Activated T-helper 1 cell treated with anti-CD3 and anti-CD28 coated beads, Interleukin-12 subunit alpha, Interleukin-12 subunit beta, Interleukin-2, Interleukin-4 antibody, amounts not matched to agents 30 ng/mL and 10 ng/mL and 1 ng/mL, durations not matched to agents 14 hours and 24 hours and 36 hours (primary cell): ENCODE measurements at regions of chr1 and their contacts with region 1.

Region 1: DNA sequence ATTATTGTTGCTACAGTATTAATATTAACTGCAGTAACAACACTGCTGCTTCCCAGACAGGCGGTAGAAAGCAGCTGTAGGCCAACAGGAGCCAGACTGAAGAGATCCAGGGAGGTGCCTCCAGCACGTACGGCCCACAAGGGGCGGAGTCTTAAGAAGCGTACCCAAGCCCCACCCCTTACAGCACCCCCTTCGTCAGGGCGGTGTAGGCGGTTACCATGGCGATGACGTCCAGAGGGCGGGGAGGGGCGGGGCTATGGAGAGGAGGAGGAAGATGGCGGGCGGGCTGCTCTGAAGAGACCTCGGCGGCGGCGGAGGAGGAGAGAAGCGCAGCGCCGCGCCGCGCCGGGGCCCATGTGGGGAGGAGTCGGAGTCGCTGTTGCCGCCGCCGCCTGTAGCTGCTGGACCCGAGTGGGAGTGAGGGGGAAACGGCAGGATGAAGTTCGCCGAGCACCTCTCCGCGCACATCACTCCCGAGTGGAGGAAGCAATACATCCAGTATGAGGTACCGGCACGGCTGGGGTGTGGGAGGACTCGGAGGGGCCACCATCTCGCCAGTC is at the start of gene XPR1:
- DNase-seq: peak; percentile 91
- H3K4me3 Mint-ChIP-seq: peak within 1 kb of the TSS; percentile 87
- H3K27ac Mint-ChIP-seq: peak within 1 kb of the TSS; percentile 87
- H3K4me1 Mint-ChIP-seq: peaks cover 8% of the 10 kb centered on the region
- H3K27me3 Mint-ChIP-seq: peaks cover 5% of the 10 kb centered on the region
- total RNA-seq, gene XPR1: 21.1 and 21.2 TPM in 2 replicates

Region 2: GRCh38 chr1:179129702-179130473 is 1502.0 kb before region 1 on chr1:
- intact Hi-C with region 1: loop called (anchors 5 kb)
- DNase-seq: no peak
- H3K4me3 Mint-ChIP-seq: peak overlapping the region; percentile 64
- H3K27ac Mint-ChIP-seq: peak overlapping the region; percentile 88
- H3K4me1 Mint-ChIP-seq: peaks cover 18% of the 10 kb centered on the region
- H3K27me3 Mint-ChIP-seq: no peaks in the 10 kb centered on the region

Region 3: DNA sequence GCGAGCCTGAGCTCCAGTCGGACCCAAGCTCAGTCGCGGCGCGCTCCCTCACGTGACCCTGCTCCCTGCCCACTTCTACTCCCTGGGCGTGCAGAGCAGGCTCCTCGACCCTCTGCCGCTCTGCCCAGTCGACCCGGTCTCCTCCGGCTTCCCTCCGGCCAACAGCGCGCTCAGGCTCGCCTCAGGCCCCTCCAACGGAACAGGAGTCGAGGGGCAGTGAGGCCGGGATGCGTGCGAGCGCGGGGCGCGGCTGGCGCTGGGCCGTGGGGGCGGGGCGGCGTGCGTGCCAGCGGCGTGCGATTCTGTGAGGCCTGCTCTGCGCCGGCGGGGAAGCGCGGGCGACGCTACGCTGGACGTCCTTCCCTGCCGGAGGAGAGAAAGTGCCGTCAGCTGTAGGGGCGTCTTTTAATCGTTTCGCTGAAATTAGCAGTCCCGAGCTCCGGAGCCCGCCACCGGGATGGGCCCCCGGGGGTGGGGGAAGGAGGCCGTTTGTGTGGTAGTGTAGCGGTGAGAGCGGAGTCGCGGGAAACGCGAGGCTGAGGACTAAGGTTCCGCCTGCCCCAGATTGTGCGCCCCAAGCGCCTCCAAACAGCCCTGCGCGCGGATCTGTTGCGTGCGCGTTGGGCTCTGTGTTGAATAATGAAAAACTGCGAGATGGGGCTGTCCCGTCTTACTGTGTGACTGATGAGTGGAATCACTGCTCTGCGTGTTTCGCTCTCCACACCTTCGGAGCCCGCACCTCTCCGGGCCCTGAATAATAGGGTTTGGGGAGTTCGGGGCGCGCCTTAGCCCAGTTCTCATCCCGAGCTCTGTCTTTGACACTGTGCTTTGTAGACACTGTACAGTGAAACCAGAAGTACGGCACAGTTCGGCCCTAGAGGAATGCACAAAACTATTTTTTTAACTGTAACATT is 129.2 kb before region 1 on chr1 and contains the start of gene ACBD6:
- intact Hi-C with region 1: loop called (anchors 1 kb)
- DNase-seq: peak; percentile 81
- H3K4me3 Mint-ChIP-seq: peak within 1 kb of the TSS; percentile 97
- H3K27ac Mint-ChIP-seq: peak within 1 kb of the TSS; percentile 97
- H3K4me1 Mint-ChIP-seq: peaks cover 25% of the 10 kb centered on the region
- H3K27me3 Mint-ChIP-seq: peaks cover 3% of the 10 kb centered on the region
- total RNA-seq, gene ACBD6: 49.4 and 50.9 TPM in 2 replicates

Region 4: DNA sequence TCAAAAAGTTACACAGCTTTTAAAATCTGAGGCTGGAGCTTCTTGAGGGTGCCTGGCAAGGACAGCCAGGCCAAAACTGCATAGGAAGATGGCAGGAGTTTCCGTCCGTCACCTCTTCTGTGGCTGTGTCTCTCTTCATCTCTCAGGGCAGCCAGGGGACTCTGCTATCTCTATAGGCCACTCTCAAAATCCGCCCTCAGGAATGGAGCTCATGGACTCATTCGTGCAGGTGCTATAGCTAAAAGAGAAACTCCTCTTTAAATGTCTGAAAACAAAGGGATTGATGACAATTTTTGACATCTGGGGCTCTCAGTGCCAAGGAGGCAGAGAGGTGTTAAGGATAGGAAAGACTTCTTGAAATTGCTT is 45.9 kb before region 1 on chr1:
- intact Hi-C with region 1: loop called (anchors 1 kb)
- DNase-seq: no peak
- H3K4me3 Mint-ChIP-seq: peak overlapping the region; percentile 70
- H3K27ac Mint-ChIP-seq: peak overlapping the region; percentile 95
- H3K4me1 Mint-ChIP-seq: peaks cover 30% of the 10 kb centered on the region
- H3K27me3 Mint-ChIP-seq: no peaks in the 10 kb centered on the region

Region 5: GRCh38 chr1:181044449-181044966 is 412.7 kb after region 1 on chr1:
- intact Hi-C with region 1: loop called (anchors 5 kb)
- DNase-seq: peak; percentile 63
- H3K4me3 Mint-ChIP-seq: peak overlapping the region; percentile 79
- H3K27ac Mint-ChIP-seq: peak overlapping the region; percentile 96
- H3K4me1 Mint-ChIP-seq: peaks cover 49% of the 10 kb centered on the region
- H3K27me3 Mint-ChIP-seq: no peaks in the 10 kb centered on the region

Region 6: DNA sequence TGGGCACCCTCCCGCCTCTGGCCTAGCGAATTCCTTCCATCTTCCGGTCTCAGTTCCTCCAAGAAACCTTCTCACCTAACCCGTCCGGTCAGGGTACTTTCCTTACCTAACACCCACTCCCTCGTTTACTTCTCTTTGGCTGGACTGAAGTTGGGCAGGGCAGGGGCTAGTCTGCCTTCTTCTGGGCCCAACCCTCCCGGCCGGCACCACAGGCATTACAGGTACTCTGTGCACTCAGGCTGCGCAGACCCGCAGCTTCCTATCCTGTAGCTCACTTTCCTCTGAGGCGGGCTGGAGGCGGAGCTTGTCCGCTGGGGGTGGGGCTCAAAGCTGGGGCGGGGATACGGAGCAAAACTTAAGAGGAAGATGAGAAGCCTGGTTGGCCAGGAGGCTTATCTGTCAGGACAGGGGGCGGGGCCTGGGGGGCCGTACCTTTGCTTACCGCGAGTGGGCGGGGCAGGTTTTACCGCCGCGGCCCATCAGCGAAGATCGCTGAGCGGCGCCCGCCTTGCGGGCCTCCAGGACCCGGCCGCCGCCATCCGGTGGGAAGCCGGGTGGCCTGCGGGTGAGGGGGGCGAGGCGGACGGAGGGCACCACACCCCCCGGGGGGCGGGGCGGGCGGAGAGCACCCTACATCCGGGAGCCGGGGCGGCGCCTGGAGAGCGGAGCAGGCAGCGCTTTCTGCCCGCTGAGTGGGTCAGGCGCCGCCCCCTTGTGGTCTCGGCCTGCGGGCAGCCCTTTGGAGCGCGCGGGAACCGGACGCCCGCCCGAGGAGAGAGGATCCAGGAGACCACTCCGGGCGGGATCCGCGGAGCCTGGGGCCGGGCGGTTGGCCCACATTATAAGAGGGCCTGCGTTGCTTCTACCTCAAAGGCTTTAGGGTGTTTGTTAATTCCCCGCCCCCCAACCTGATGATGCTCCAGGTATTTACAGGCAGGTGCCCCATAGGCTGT is 1397.8 kb after region 1 on chr1:
- intact Hi-C with region 1: loop called (anchors 1 kb)
- DNase-seq: peak; percentile 95
- H3K4me3 Mint-ChIP-seq: peak overlapping the region; percentile 91
- H3K27ac Mint-ChIP-seq: peak overlapping the region; percentile 94
- H3K4me1 Mint-ChIP-seq: peaks cover 12% of the 10 kb centered on the region
- H3K27me3 Mint-ChIP-seq: peaks cover 3% of the 10 kb centered on the region